Posterior vena cava (tissue), 2 donors: ENCODE measurements at regions of chr2 and their contacts with region 1.

Region 1: GRCh38 chr2:155442755-155443372 is 744.4 kb downstream of the KCNJ3 start:
- DNase-seq: no peak

Region 2: DNA sequence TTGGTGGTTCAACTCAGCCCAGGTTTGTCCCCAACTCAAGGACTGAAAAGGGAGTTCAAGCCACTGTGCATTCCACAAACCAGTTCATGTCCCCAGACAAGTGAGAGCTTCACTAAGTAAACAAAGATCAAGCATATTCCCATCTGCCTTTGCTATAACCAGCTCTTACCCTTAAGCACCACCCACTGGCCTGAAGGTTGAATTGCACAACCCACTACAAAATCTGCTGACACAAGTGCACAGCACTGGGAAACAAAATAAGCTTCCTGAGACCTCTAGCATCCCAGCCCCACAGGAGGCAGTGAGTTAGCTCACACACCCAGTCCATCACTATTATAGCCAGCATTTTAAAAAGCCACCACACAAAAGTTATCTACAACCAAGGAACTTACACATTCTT is 373.0 kb after region 1 on chr2:
- intact Hi-C with region 1: no loop called
- DNase-seq: peak; percentile 43

Region 3: DNA sequence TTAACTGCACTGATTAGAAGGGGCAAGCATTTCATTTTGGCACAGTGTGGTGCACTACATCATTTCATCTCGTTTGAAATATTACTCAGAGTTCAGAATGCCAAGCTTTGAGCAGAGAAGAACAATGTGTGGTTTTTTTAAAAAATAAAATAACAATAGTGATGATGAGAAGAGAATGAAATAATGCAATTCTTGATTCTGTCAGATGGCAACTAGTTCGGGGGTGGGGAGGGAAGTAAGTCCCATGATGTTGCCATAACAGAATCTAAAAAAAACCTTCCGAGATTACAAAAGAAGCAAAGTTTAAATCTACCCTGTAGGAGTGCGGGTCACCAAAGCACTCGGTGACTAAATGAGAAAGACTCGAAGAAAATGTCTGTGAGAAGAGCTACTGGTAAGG is 399.2 kb after region 1 on chr2:
- intact Hi-C with region 1: no loop called
- DNase-seq: no peak

Region 4: DNA sequence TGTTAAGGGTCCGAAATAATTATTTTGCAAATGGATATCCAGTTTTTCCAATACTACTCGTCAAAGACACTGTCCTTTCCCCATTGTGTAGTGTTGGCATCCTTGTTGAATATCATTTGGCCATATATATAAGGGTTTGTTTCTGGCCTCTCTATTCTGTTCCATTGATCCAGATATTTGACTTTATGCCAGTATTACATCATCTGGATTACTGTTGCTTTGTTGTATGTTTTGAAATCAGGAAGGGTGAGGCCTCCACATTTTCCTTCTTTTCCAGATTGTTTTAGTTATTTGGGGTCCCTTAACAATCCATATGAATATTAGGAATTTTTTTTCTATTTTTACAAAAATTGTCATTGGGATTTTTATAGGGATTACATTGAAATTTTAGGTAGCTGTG is 1237.4 kb after region 1 on chr2:
- intact Hi-C with region 1: loop called in 1 of 2 experiments (anchors 5 kb)
- DNase-seq: no peak